ENCODE measurements at regions of chr3 and their contacts with region 1.

Region 1: GRCh38 chr3:53219895-53220483 is 35.8 kb downstream of the TKT start:
- DNase-seq: peak; percentile 84
- H3K4me3 Mint-ChIP-seq: no peak overlapping the region
- H3K27ac Mint-ChIP-seq: peak overlapping the region; percentile 32
- H3K4me1 Mint-ChIP-seq: no peaks in the 10 kb centered on the region
- H3K27me3 Mint-ChIP-seq: no peaks in the 10 kb centered on the region
- CTCF ChIP-seq: peak; percentile 88

Region 2: GRCh38 chr3:53202331-53203015 is 17.5 kb before region 1 on chr3:
- CTCF ChIA-PET with region 1: interaction called, 10 read pairs
- POLR2A ChIA-PET with region 1: no interaction called
- intact Hi-C with region 1: no loop called
- DNase-seq: no peak
- H3K4me3 Mint-ChIP-seq: no peak overlapping the region
- H3K27ac Mint-ChIP-seq: no peak overlapping the region
- H3K4me1 Mint-ChIP-seq: no peaks in the 10 kb centered on the region
- H3K27me3 Mint-ChIP-seq: no peaks in the 10 kb centered on the region
- CTCF ChIP-seq: no peak

Region 3: GRCh38 chr3:53236112-53236841 is 16.3 kb after region 1 on chr3:
- CTCF ChIA-PET with region 1: interaction called, 30 read pairs
- POLR2A ChIA-PET with region 1: interaction called, 4 read pairs
- intact Hi-C with region 1: no loop called
- DNase-seq: peak; percentile 81
- H3K4me3 Mint-ChIP-seq: no peak overlapping the region
- H3K27ac Mint-ChIP-seq: peak overlapping the region; percentile 66
- H3K4me1 Mint-ChIP-seq: peaks cover 30% of the 10 kb centered on the region
- H3K27me3 Mint-ChIP-seq: no peaks in the 10 kb centered on the region
- CTCF ChIP-seq: no peak

Region 4: GRCh38 chr3:53255775-53256703 is 36.0 kb after region 1 on chr3 and contains the start of gene TKT:
- CTCF ChIA-PET with region 1: interaction called, 18 read pairs
- POLR2A ChIA-PET with region 1: interaction called, 3 read pairs
- intact Hi-C with region 1: no loop called
- DNase-seq: peak; percentile 84
- H3K4me3 Mint-ChIP-seq: peak within 1 kb of the TSS; percentile 95
- H3K27ac Mint-ChIP-seq: peak within 1 kb of the TSS; percentile 67
- H3K4me1 Mint-ChIP-seq: peaks cover 23% of the 10 kb centered on the region
- H3K27me3 Mint-ChIP-seq: no peaks in the 10 kb centered on the region
- CTCF ChIP-seq: no peak
- total RNA-seq, gene TKT: 179 and 326 TPM in 2 replicates

Region 5: GRCh38 chr3:53269888-53270880 is 50.2 kb after region 1 on chr3:
- CTCF ChIA-PET with region 1: interaction called, 8 read pairs
- POLR2A ChIA-PET with region 1: interaction called, 4 read pairs
- intact Hi-C with region 1: loop called (anchors 1 kb)
- DNase-seq: peak; percentile 100
- H3K4me3 Mint-ChIP-seq: peak overlapping the region; percentile 53
- H3K27ac Mint-ChIP-seq: peak overlapping the region; percentile 99
- H3K4me1 Mint-ChIP-seq: peaks cover 11% of the 10 kb centered on the region
- H3K27me3 Mint-ChIP-seq: no peaks in the 10 kb centered on the region
- CTCF ChIP-seq: no peak

Region 6: DNA sequence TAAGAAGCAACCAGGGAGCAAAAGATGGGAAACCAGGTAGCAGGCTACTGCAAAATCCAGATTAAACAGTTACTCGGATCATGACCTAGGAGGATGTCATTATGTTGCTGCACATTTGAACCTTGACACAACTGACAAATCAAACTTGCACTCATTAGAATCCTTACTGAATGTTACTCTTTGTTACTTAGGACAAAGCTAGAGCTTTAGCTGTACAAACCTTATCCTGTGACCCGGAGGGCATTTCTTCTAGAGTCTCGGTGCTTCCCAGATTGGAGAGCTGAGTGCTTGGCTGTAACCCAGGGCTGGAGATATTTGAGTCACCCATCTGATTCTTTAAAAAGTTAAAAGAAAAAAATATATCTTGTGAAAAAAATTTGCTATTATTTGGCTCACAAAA is 84.0 kb after region 1 on chr3:
- CTCF ChIA-PET with region 1: interaction called, 7 read pairs
- POLR2A ChIA-PET with region 1: no interaction called
- intact Hi-C with region 1: loop called (anchors 1 kb)
- DNase-seq: no peak
- H3K4me3 Mint-ChIP-seq: no peak overlapping the region
- H3K27ac Mint-ChIP-seq: no peak overlapping the region
- H3K4me1 Mint-ChIP-seq: no peaks in the 10 kb centered on the region
- H3K27me3 Mint-ChIP-seq: no peaks in the 10 kb centered on the region
- CTCF ChIP-seq: no peak

Region 7: GRCh38 chr3:53709860-53710674 is 490.1 kb after region 1 on chr3:
- CTCF ChIA-PET with region 1: interaction called, 17 read pairs
- POLR2A ChIA-PET with region 1: no interaction called
- intact Hi-C with region 1: no loop called
- DNase-seq: peak; percentile 67
- H3K4me3 Mint-ChIP-seq: no peak overlapping the region
- H3K27ac Mint-ChIP-seq: no peak overlapping the region
- H3K4me1 Mint-ChIP-seq: no peaks in the 10 kb centered on the region
- H3K27me3 Mint-ChIP-seq: no peaks in the 10 kb centered on the region
- CTCF ChIP-seq: peak; percentile 79

Measured in MCF 10A (cell line).